Activated naive CD4-positive, alpha-beta T cell treated with anti-CD3 and anti-CD28 coated beads, Interleukin-2, amount 10 ng/mL, durations not matched to agents 7 days and 5 days (primary cell): ENCODE measurements at regions of chr11 and their contacts with region 1.

Region 1: DNA sequence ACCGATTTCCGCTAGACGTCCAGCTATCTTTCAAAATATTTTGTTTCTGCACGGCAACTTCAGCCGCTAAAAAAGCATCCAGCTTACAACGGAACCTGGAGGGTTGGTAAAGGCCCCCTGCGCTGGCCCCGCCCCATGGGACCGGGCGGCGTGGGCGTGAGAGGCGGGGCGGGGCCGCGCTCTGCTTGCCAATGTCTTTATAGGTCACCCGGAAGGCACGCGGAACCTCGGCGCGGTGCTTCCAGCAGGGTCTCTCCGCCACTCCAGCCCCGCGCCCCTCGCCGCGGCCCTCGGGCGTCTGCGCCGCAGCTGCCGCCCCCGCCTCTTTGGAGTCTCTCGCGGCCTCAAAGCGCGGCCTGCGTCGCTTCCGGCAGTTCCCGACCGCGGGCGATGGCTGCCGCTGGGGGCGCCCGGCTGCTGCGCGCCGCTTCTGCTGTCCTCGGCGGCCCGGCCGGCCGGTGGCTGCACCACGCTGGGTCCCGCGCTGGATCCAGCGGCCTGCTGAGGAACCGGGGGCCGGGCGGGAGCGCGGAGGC is at the start of gene FDX1:
- DNase-seq: peak; percentile 83
- H3K4me3 Mint-ChIP-seq: peak within 1 kb of the TSS; percentile 96
- H3K27ac Mint-ChIP-seq: peak within 1 kb of the TSS; percentile 93
- H3K4me1 Mint-ChIP-seq: peaks cover 41% of the 10 kb centered on the region
- H3K27me3 Mint-ChIP-seq: no peaks in the 10 kb centered on the region

Region 2: GRCh38 chr11:110356756-110357671 is 72.8 kb before region 1 on chr11:
- CTCF ChIA-PET with region 1: no interaction called
- DNase-seq: no peak
- H3K4me3 Mint-ChIP-seq: no peak overlapping the region
- H3K27ac Mint-ChIP-seq: no peak overlapping the region
- H3K4me1 Mint-ChIP-seq: no peaks in the 10 kb centered on the region
- H3K27me3 Mint-ChIP-seq: no peaks in the 10 kb centered on the region

Region 3: DNA sequence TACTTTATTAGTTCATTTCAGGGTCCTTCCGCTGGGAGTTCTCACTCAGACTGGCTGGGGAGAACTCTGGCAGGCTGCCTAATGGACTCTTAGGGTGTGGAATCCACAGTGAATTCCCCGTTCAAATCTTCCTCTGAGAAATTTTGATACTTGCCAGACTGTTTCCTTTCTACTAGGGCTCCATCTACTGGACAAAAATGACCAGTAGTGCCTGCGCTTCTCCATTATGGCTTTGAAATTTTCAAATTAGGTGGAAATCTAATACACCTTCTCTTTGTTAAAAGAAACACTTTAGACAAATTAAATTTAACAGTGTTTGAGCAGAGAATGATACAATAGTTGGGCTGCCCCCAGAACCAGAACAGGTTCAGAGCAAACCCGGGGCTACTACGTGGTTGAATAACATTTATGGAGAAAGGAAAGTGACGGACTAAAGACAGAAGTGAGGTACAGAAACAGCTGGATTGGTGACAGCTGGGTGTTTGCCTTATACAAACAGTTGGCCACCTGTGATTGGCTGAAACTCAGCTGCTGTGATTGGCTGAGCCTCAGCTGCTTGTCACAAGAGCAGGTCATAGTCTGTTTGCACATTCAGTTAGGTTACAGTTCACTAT is 53.0 kb before region 1 on chr11:
- CTCF ChIA-PET with region 1: interaction called, 15 read pairs
- DNase-seq: peak; percentile 29
- H3K4me3 Mint-ChIP-seq: no peak overlapping the region
- H3K27ac Mint-ChIP-seq: no peak overlapping the region
- H3K4me1 Mint-ChIP-seq: peaks cover 15% of the 10 kb centered on the region
- H3K27me3 Mint-ChIP-seq: no peaks in the 10 kb centered on the region

Region 4: GRCh38 chr11:110447897-110448745 is 18.3 kb after region 1 on chr11:
- CTCF ChIA-PET with region 1: interaction called, 27 read pairs
- DNase-seq: no peak
- H3K4me3 Mint-ChIP-seq: no peak overlapping the region
- H3K27ac Mint-ChIP-seq: no peak overlapping the region
- H3K4me1 Mint-ChIP-seq: peaks cover 28% of the 10 kb centered on the region
- H3K27me3 Mint-ChIP-seq: no peaks in the 10 kb centered on the region